T-cell (primary cell): ENCODE measurements at regions of chr13 and their contacts with region 1.

Region 1: DNA sequence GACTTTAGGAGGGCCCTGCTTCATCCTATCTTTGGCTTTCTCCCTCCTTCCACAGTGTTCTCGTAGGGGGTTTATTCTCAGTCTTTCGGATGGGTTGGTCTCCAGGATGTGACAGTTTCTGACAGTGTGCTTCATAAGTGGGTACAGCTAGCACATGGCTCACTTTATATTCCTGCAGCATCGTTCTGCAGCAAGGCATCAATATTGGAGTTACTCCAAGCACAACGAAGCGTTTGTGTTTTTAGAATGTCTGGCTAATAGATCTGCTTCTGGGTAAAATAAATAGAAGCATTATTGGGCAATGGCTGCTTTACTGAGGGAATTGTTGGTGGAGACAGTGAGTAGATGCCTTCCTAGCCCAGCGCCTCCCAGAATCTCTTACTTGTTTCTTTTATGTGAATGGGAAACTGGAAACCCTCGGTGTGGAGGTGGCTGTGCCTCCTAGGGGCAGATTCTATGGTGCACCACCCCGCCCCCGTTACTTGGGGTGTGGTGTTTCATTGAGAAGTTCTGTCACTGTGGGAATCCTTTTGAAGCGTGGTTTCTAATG is 2.0 kb downstream of the FARP1 start:
- DNase-seq: no peak
- ATAC-seq: no peak
- H3K4me3 ChIP-seq: no peak overlapping the region
- H3K4me3 Mint-ChIP-seq: peak overlapping the region; percentile 18 to 73 (median 35)
- H3K27ac ChIP-seq: no peak overlapping the region
- H3K27ac Mint-ChIP-seq: peak overlapping the region in 1 of 2 donors; percentile 1
- H3K4me1 ChIP-seq: peaks cover 0 to 8% of the 10 kb centered on the region in 2 experiments
- H3K4me1 Mint-ChIP-seq: peaks cover 0 to 17% (median 8%) of the 10 kb centered on the region in 3 donors
- H3K27me3 ChIP-seq: peaks cover 9 to 36% of the 10 kb centered on the region in 2 experiments
- H3K27me3 Mint-ChIP-seq: peaks cover 50 to 55% of the 10 kb centered on the region in 2 donors

Region 2: GRCh38 chr13:97018029-97018831 is 1126.6 kb before region 1 on chr13:
- CTCF ChIA-PET with region 1: no interaction called
- POLR2A ChIA-PET with region 1: interaction called in 1 of 2 experiments, 10 read pairs
- DNase-seq: peak in 17 of 35 experiments; percentile 2 to 65 (median 14)
- ATAC-seq: peak in 2 of 4 experiments; percentile 45 to 52
- H3K4me3 ChIP-seq: no peak overlapping the region
- H3K4me3 Mint-ChIP-seq: no peak overlapping the region
- H3K27ac ChIP-seq: no peak overlapping the region
- H3K27ac Mint-ChIP-seq: no peak overlapping the region
- H3K4me1 ChIP-seq: peaks cover 2 to 3% of the 10 kb centered on the region in 2 experiments
- H3K4me1 Mint-ChIP-seq: peaks cover 7 to 11% (median 8%) of the 10 kb centered on the region in 3 donors
- H3K27me3 ChIP-seq: peaks cover 2 to 9% of the 10 kb centered on the region in 2 experiments
- H3K27me3 Mint-ChIP-seq: peaks cover 37 to 48% of the 10 kb centered on the region in 2 donors